ENCODE measurements at regions of chr7 and their contacts with region 1.

Region 1: DNA sequence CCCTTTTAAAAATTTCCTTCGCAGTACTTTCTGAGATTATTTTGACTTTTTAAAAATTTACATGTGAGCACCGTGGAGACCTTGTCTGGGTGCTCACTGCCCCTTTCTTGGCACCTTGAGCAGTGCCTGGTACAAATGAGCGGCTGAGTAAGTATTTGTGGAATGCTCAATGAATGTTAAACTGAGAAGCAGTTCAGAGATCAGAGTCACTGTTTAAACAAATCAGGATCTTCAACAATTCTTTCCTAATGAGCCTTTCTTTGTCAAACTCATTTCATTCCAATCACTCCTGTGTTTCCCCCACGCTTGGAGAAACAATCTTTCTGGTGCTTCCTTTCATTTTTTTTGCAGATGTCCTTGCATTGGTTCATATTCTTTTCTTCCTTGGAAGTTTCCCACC is 611.3 kb upstream of the GALNT17 start:
- DNase-seq: no peak
- H3K4me3 ChIP-seq: no peak overlapping the region
- H3K27ac ChIP-seq: no peak overlapping the region
- H3K4me1 ChIP-seq: no peaks in the 10 kb centered on the region
- H3K27me3 ChIP-seq: no peaks in the 10 kb centered on the region
- CTCF ChIP-seq: no peak
- POLR2A ChIP-seq: no peak

Region 2: GRCh38 chr7:70006261-70006920 is 514.2 kb before region 1 on chr7:
- intact Hi-C with region 1: no loop called
- DNase-seq: no peak
- H3K4me3 ChIP-seq: no peak overlapping the region
- H3K27ac ChIP-seq: no peak overlapping the region
- H3K4me1 ChIP-seq: no peaks in the 10 kb centered on the region
- H3K27me3 ChIP-seq: no peaks in the 10 kb centered on the region
- CTCF ChIP-seq: no peak
- POLR2A ChIP-seq: no peak

Region 3: GRCh38 chr7:70288781-70289456 is 231.7 kb before region 1 on chr7:
- intact Hi-C with region 1: loop called (anchors 10 kb)
- DNase-seq: no peak
- H3K4me3 ChIP-seq: no peak overlapping the region
- H3K27ac ChIP-seq: no peak overlapping the region
- H3K4me1 ChIP-seq: no peaks in the 10 kb centered on the region
- H3K27me3 ChIP-seq: no peaks in the 10 kb centered on the region
- CTCF ChIP-seq: no peak
- POLR2A ChIP-seq: no peak

Measured in uterus (tissue), 4 donors.